ENCODE measurements at regions of chr5 and their contacts with region 1.

Region 1: DNA sequence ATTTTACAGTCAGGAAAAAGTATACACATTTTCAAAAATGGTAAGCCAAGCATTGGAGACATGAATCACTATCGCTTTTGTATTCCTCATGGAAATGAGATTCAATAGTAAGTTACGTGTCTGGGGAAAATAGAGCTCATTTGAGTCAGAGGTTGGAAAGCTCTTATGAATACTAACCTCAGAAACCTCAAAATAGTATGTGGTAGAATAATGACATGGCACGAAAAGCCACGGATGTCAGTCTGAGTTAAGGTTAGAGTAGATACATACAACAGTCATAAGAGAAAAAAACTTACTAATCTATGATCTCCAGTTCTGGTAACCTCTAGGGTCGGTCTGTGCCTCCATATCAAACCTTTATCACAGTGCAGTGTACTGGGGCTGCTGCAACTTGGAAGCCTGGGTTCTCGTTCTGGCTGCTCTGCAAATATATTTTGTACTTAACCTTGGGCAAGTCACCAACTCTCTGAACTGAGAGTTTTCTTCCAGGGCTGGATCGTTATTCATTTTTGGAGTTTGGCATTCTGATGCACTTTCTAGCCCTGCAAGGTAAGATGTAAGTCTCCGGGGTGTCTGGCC is 31.8 kb downstream of the MAP1B start:
- DNase-seq: no peak
- ATAC-seq: no peak

Region 2: GRCh38 chr5:71658916-71659662 is 479.9 kb before region 1 on chr5:
- intact Hi-C with region 1: no loop called
- DNase-seq: no peak
- ATAC-seq: peak; percentile 62

Region 3: DNA sequence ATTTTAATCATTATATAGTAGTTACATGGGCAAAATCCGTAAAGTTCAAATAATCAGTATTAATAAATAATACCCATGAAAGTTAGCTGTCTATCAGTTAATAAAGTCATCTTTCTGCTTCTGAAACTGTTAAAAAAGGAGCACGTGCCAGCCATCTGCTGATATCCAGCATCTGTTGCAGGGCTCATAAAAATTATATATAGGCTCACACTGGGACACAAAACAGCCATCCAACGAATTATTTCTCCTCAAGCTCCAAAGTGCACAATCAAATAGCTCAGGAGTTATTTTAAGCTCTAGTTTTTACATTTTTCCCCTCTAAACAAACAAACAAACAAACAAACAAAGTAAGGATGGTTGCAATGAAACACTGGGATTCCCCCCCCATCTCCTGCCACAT is 132.7 kb after region 1 on chr5:
- intact Hi-C with region 1: loop called in 1 of 2 experiments (anchors 10 kb)
- DNase-seq: no peak
- ATAC-seq: no peak

Region 4: GRCh38 chr5:72307968-72308852 is 169.2 kb after region 1 on chr5:
- intact Hi-C with region 1: loop called in 1 of 2 experiments (anchors 10 kb)
- DNase-seq: peak; percentile 97 to 98
- ATAC-seq: peak; percentile 95